PC-9 (cell line): ENCODE measurements at regions of chr19 and their contacts with region 1.

Region 1: GRCh38 chr19:4164262-4164661 is 10.8 kb downstream of the CREB3L3 start:
- DNase-seq: no peak
- H3K4me3 ChIP-seq: no peak overlapping the region
- H3K27ac ChIP-seq: no peak overlapping the region
- H3K4me1 ChIP-seq: no peaks in the 10 kb centered on the region
- H3K27me3 ChIP-seq: peaks cover 4% of the 10 kb centered on the region
- CTCF ChIP-seq: no peak

Region 2: GRCh38 chr19:3821857-3822364 is 342.4 kb before region 1 on chr19:
- CTCF ChIA-PET with region 1: no interaction called
- POLR2A ChIA-PET with region 1: no interaction called
- intact Hi-C with region 1: no loop called
- DNase-seq: peak in 1 of 2 experiments; percentile 56
- H3K4me3 ChIP-seq: no peak overlapping the region
- H3K27ac ChIP-seq: no peak overlapping the region
- H3K4me1 ChIP-seq: no peaks in the 10 kb centered on the region
- H3K27me3 ChIP-seq: peaks cover 29% of the 10 kb centered on the region; the same call in 1 of the 2 replicates
- CTCF ChIP-seq: peak; percentile 92

Region 3: DNA sequence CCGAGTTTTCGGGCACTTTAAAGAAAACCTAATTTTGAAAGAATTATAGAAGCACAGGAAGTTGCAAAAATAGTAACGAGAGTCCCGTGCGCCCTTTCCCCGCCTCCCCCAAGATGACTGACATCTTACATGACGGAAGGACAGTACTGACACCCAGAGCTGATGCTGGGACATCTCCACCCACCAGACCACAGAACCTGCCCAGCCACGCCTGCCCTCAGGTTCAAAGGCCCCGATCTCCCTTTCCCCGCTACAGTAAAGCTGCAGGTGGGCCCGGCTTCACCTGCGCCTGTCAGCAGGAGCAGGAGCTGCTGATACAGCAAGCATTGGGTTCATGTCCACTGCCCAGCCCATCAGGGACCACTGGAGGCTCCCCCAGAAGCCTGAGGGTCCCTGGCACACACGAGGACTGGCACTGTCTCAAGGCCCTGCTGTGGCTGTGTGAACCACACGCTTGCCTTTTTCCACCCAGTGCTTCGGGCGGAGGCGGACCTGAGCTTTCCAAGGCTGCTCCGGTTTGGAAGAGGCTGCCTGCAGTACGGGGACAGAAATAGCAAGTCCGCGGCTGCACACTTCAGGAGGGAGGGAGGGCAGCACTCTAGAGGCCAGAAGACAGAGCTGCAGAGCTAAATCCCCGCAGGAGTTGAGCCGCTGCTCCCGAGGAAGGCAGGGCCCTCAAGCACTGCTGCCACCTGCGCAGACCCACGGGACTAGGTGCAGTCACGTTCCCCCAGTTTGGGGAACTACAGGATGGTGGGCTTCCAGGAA is 49.0 kb before region 1 on chr19:
- CTCF ChIA-PET with region 1: no interaction called
- POLR2A ChIA-PET with region 1: no interaction called
- intact Hi-C with region 1: no loop called
- DNase-seq: no peak
- H3K4me3 ChIP-seq: no peak overlapping the region
- H3K27ac ChIP-seq: no peak overlapping the region
- H3K4me1 ChIP-seq: no peaks in the 10 kb centered on the region
- H3K27me3 ChIP-seq: no peaks in the 10 kb centered on the region
- CTCF ChIP-seq: no peak

Region 4: GRCh38 chr19:4152241-4152998 is 11.8 kb before region 1 on chr19:
- CTCF ChIA-PET with region 1: no interaction called
- POLR2A ChIA-PET with region 1: no interaction called
- intact Hi-C with region 1: loop called (anchors 2 kb)
- DNase-seq: no peak
- H3K4me3 ChIP-seq: no peak overlapping the region
- H3K27ac ChIP-seq: no peak overlapping the region
- H3K4me1 ChIP-seq: no peaks in the 10 kb centered on the region
- H3K27me3 ChIP-seq: no peaks in the 10 kb centered on the region
- CTCF ChIP-seq: no peak